Activated CD8-positive, alpha-beta memory T cell treated with anti-CD3 and anti-CD28 coated beads, Interleukin-2, amount 10 ng/mL, durations not matched to agents 7 days and 5 days (primary cell): ENCODE measurements at regions of chr5 and their contacts with region 1.

Region 1: GRCh38 chr5:317086-317811 is 4.3 kb upstream of the AHRR start:
- DNase-seq: peak; percentile 82
- ATAC-seq: peak; percentile 73
- H3K4me3 Mint-ChIP-seq: no peak overlapping the region
- H3K27ac Mint-ChIP-seq: no peak overlapping the region
- H3K4me1 Mint-ChIP-seq: peaks cover 13% of the 10 kb centered on the region
- H3K27me3 Mint-ChIP-seq: peaks cover 13% of the 10 kb centered on the region

Region 2: GRCh38 chr5:102411-103043 is 214.7 kb before region 1 on chr5:
- CTCF ChIA-PET with region 1: no interaction called
- DNase-seq: no peak
- ATAC-seq: no peak
- H3K4me3 Mint-ChIP-seq: no peak overlapping the region
- H3K27ac Mint-ChIP-seq: no peak overlapping the region
- H3K4me1 Mint-ChIP-seq: no peaks in the 10 kb centered on the region
- H3K27me3 Mint-ChIP-seq: peaks cover 18% of the 10 kb centered on the region

Region 3: DNA sequence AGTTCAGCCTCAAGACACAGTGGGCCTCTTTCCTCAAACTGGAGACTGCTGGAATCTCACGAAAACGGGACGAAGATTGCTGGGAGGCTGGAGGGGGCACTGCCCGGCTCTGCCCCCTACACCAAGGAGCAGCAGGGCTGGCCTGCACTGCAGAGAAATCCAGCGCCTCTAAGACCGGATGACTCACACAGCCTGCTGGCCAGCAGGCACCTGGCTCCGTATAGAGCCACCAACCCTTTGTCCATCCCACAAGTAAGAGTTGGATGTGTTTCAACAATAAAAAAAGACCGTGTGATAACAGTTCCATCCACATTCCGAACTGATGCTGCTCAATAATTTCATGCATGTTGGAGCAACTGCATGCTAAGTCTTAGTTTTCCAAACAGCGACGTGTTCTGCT is 110.8 kb before region 1 on chr5:
- CTCF ChIA-PET with region 1: no interaction called
- DNase-seq: no peak
- ATAC-seq: no peak
- H3K4me3 Mint-ChIP-seq: no peak overlapping the region
- H3K27ac Mint-ChIP-seq: no peak overlapping the region
- H3K4me1 Mint-ChIP-seq: peaks cover 9% of the 10 kb centered on the region
- H3K27me3 Mint-ChIP-seq: no peaks in the 10 kb centered on the region

Region 4: DNA sequence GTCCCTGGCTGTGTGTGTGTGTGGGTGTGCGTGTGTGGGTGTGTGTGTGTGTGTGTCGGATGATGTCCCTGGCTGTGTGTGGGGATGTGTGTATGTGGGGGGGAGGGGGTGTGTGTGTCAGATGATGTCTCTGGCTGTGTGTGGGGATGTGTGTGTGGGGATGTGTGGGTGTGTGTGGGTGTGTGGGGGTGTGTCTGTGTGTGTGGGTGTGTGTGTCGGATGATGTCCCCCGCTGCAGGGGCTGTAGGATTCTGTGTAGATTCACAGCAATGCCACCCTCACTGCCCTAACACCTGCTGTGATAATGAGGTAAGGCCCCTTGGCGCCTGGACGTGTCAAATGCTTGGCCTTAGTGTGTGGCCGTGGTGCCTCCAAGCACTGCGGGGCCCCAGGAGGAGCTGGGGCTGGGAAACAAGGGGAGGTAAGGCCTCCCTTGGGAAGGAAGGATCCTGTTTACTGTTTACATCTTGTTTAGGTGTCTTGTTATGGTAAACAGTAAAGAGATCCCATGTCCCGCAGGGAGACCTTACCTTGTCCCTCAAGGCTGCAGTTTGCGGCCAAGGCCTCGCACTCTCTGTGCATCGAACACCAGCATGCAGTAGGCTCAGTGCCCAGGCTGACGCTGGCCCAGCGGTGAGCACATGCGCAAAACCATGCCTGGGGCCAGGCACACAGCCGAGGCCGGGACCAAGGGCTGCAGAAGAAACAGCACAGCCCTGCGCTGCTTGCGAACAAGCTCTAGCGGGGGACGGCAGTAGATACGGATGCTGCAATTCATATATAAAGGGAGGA is 28.4 kb after region 1 on chr5:
- CTCF ChIA-PET with region 1: interaction called, 10 read pairs
- DNase-seq: peak; percentile 64
- ATAC-seq: peak; percentile 67
- H3K4me3 Mint-ChIP-seq: peak overlapping the region; percentile 77
- H3K27ac Mint-ChIP-seq: peak overlapping the region; percentile 89
- H3K4me1 Mint-ChIP-seq: peaks cover 68% of the 10 kb centered on the region
- H3K27me3 Mint-ChIP-seq: no peaks in the 10 kb centered on the region

Region 5: DNA sequence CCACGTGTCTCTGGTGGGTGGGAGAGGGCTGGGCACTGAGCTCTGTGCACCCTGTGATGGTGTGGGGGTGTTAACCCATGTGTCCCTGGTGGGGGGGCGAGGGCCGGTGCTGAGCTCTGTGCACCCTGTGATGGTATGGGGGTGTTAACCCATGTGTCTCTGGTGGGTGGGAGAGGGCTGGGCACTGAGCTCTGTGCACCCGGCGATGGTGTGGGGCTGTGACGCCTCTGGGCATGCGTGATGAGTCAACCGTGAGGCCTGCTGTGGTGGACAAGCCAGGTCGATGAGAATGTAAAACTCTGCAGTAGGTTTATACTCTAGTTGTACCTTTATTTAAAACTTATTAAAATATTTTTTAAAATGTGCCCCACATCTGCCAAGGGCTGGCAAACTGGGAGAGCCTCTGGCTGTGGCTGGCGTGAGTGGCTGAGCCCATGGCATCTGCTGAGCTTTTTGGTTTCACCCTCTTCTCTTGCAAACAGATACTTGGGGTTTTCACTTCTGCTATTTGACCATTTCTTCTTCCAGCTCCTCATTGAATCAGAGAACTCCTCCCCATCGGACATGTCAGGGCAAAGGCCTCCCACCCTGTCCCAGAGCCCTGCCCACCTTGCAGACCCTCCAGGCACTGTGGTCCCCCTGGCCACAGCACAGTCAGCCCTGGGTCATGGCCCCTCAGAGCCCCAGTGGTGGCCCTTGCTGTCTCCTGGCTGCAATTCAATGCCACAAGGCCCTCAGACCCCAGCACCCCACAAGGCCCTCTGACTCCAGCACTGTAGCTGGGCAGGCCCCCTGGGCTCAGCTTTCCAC is 107.3 kb after region 1 on chr5:
- CTCF ChIA-PET with region 1: interaction called, 44 read pairs
- DNase-seq: no peak
- ATAC-seq: no peak
- H3K4me3 Mint-ChIP-seq: no peak overlapping the region
- H3K27ac Mint-ChIP-seq: peak overlapping the region; percentile 52
- H3K4me1 Mint-ChIP-seq: peaks cover 20% of the 10 kb centered on the region
- H3K27me3 Mint-ChIP-seq: no peaks in the 10 kb centered on the region

Region 6: GRCh38 chr5:431001-431710 is 113.9 kb after region 1 on chr5:
- CTCF ChIA-PET with region 1: interaction called, 44 read pairs
- DNase-seq: peak; percentile 60
- ATAC-seq: peak; percentile 84
- H3K4me3 Mint-ChIP-seq: no peak overlapping the region
- H3K27ac Mint-ChIP-seq: no peak overlapping the region
- H3K4me1 Mint-ChIP-seq: no peaks in the 10 kb centered on the region
- H3K27me3 Mint-ChIP-seq: no peaks in the 10 kb centered on the region

Region 7: GRCh38 chr5:446864-447263 is 129.6 kb after region 1 on chr5:
- CTCF ChIA-PET with region 1: interaction called, 17 read pairs
- DNase-seq: no peak
- ATAC-seq: no peak
- H3K4me3 Mint-ChIP-seq: no peak overlapping the region
- H3K27ac Mint-ChIP-seq: no peak overlapping the region
- H3K4me1 Mint-ChIP-seq: peaks cover 34% of the 10 kb centered on the region
- H3K27me3 Mint-ChIP-seq: no peaks in the 10 kb centered on the region

Region 8: DNA sequence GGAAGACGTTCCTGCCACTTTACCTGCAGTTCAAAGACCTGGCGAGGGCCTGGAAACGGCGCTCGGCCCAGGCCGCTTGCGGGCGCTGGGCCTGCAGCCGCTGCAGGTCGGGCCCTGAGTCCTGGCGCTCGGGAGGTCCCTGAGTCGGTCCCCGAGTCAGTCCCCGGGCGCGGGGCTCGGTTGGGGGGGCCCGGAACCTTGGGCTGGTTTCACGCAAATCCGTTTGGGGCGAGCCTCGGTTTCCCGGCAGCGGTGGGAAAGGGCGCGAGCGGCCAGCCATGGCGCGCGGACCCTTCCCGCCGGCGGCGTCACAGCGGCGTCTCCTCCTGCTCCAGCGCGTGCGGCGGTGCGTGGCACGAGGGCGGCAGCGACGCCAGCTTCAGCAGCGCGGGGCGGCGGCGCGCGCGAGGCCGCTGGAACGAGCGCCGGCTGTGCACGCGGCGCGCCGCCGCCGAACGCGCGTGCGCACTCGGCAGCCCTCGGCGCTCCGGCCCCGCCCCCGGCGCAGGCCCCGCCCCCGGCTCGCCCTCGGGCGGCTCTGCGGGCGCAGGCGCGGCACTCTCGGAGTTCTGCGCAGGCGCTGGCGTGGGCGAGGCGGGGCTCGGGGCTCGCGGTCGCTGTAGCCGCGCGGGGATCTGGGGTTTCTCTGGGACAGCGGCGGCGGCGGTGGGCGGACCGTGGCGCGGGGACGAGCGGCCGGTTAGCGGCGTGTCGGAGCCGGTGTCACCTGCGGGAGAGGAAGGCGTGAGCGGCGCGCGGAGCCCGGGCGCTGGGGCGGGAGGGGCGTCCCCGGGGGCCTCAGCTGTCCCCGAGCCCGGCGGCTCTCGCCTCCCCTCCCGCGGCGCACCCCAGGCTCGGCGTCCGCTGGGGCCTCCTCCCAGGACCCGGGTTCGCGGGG is 155.7 kb after region 1 on chr5:
- CTCF ChIA-PET with region 1: interaction called, 17 read pairs
- DNase-seq: peak; percentile 87
- ATAC-seq: peak; percentile 86
- H3K4me3 Mint-ChIP-seq: peak overlapping the region; percentile 75
- H3K27ac Mint-ChIP-seq: peak overlapping the region; percentile 79
- H3K4me1 Mint-ChIP-seq: peaks cover 25% of the 10 kb centered on the region
- H3K27me3 Mint-ChIP-seq: peaks cover 5% of the 10 kb centered on the region

Region 9: DNA sequence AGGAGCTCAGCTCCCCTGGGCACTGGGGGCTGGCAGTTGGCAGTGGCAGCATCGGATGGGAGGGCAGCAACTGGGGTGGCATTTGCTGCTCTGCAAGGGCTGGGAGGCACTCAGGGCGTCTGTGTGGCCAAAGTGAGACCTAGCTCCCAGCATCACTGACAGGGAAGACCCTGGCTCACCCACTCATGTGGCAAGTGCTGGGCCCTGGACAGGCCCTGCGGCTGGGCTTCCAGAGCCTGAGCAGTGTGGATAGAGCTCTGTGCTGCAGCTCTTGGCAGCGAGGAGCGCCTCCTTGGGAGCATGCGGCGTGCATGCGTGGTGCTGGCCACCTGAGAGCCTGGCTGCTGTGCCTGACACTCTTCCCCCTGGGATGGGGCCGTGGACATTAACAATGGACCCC is 305.1 kb after region 1 on chr5:
- CTCF ChIA-PET with region 1: no interaction called
- DNase-seq: no peak
- ATAC-seq: no peak
- H3K4me3 Mint-ChIP-seq: no peak overlapping the region
- H3K27ac Mint-ChIP-seq: no peak overlapping the region
- H3K4me1 Mint-ChIP-seq: no peaks in the 10 kb centered on the region
- H3K27me3 Mint-ChIP-seq: no peaks in the 10 kb centered on the region